Astrocyte of the cerebellum (primary cell): ENCODE measurements at regions of chr2 and their contacts with region 1.

Region 1: DNA sequence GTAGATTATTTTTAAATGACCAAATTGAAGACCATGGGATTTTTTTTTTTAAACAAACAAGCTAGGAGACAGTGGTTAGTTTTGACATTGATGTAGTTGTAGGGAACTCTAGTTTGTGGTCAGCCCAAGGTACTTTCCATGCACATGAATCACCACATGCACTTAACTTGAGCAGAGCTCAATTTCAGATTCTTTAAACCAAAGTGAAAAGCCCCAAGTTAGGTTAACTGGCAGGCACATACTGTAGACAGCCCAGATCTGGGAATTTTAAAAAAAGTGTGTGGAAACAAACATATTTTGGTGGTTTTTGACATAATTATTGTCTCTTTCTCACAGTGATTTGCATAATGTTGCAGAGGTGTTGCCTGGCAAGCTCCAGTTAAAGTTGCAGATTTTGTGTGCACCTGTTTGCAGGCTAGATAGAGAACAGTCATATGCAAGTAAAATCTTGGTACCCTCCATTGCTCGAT is 88.4 kb downstream of the BCL2L11 start:
- DNase-seq: peak; percentile 85
- H3K4me3 ChIP-seq: no peak overlapping the region
- CTCF ChIP-seq: no peak

Region 2: DNA sequence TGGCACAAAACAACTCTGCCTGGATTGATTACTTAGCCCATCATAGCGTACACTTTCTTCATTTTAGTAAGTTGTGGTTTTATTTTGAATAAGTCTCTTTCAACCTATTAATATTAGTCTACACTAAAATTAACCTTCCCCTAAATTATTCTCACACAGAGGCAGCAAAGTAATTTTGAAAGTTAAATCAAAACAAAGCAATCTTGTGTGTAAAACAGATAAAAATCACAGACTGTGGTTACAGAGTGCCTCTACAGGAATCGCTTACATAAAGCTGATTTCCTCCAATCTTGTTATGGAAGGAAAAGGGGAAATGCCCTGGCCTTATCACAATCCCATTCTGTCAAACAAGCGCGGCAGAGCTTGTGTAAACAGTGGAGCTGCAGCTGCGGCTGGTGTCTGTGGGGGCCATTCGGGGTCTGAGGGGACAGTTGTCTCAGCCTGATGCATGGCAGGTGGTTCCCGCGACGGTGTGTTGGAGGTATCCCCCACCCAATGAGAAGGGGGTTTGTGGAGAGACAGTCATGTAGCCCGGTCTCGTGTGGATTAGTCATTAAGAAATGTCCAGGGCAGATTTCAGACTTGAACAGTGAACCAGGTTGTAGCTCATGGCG is 46.3 kb before region 1 on chr2:
- in situ Hi-C with region 1: loop called (anchors 5 kb)
- DNase-seq: no peak
- H3K4me3 ChIP-seq: no peak overlapping the region
- CTCF ChIP-seq: no peak